PC-9 (cell line): ENCODE measurements at regions of chr10 and their contacts with region 1.

Region 1: DNA sequence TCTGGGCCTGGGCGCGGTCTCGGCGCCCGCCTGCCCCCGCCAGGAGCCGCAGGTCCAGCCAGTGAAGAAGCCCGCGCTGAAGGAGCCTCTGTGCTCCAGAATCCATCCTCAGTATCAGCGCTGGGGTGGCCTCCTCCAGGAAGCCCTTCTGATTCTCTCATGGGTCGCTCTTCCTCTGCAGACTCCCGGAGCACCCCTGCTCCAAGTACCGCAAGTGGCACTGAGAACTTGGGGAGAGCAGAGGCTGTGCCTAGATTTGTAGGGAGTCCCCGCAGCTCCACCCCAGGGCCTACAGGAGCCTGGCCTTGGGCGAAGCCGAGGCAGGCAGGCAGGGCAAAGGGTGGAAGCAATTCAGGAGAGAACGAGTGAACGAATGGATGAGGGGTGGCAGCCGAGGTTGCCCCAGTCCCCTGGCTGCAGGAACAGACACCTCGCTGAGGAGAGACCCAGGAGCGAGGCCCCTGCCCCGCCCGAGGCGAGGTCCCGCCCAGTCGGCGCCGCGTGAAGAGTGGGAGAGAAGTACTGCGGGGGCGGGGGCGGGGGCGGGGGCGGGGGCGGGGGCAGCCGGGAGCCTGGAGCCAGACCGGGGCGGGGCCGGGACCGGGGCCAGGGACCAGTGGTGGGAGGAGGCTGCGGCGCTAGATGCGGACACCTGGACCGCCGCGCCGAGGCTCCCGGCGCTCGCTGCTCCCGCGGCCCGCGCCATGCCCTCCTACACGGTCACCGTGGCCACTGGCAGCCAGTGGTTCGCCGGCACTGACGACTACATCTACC is at the start of gene ALOX5:
- DNase-seq: peak; percentile 52 to 91
- H3K4me3 ChIP-seq: peak within 1 kb of the TSS; percentile 84
- H3K27ac ChIP-seq: peak within 1 kb of the TSS; percentile 99
- H3K4me1 ChIP-seq: peaks cover 37% of the 10 kb centered on the region
- H3K27me3 ChIP-seq: no peaks in the 10 kb centered on the region
- CTCF ChIP-seq: no peak
- total RNA-seq, gene ALOX5: 66.5 and 86.8 TPM in 2 replicates

Region 2: DNA sequence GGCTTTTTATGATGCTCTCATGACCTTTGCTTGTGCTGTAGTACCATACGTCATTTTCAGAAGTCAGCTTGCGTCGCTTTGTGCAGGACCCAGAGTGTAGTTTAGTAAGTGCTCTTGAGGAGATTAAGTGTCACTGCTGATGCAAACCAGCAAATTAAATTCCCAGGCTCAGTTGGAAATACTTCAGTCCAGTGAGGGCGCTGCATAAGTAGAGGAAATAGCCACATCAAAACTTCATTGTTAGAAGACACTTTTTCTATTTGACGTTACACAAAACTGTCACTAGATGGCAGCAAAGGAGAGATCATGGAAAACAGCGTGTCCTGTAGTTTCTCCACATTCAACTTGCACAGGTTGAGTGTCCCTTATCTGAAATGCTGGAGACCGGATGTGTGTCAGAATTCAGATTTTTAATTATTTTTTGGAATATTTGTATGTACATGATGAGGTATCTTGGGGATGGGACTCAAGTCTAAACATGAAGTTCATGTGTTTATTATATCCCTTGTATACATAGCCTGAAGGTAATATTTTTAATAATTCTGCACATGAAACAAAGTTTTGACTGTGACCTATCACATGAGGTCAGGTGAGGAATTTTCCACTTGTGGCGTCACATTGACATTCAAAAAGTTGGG is 365.1 kb before region 1 on chr10:
- CTCF ChIA-PET with region 1: no interaction called
- POLR2A ChIA-PET with region 1: no interaction called
- intact Hi-C with region 1: loop called (anchors 10 kb)
- DNase-seq: peak; percentile 54 to 84
- H3K4me3 ChIP-seq: no peak overlapping the region
- H3K27ac ChIP-seq: no peak overlapping the region
- H3K4me1 ChIP-seq: no peaks in the 10 kb centered on the region
- H3K27me3 ChIP-seq: no peaks in the 10 kb centered on the region
- CTCF ChIP-seq: peak; percentile 92

Region 3: DNA sequence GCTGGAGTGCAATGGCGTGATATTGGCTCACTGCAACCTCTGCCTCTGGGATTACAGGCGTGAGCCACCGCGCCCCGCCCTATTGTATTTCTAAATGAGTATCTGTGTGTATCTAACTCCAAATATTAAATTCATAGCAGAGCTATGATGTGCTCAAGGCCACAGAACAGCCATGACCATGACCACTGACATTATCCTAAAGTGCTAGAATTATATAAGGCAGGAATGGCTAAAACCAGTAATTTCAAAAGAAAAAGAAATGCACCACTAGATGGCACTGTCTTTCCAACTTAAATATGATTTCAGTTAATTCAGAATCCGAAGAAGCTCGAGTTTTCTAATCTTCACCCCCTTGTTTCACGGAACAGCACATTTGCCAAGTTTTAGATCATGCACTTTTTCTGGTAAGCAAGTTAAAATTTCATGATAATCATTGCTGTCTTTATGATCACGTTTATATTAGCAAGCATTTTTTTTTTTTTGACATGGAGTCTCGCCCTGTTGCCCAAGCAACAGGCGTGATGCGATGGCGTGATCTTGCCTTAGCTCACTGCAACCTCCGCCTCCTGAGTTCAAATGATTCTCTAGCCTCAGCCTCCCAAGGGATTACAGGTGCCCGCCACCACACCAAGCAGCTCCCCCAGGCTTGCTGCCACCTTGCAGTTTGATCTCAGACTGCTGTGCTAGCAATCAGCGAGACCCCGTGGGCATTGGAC is 123.6 kb before region 1 on chr10:
- CTCF ChIA-PET with region 1: no interaction called
- POLR2A ChIA-PET with region 1: no interaction called
- intact Hi-C with region 1: loop called (anchors 10 kb)
- DNase-seq: peak; percentile 46 to 77
- H3K4me3 ChIP-seq: peak overlapping the region; percentile 48; the same call in 1 of the 2 replicates
- H3K27ac ChIP-seq: no peak overlapping the region
- H3K4me1 ChIP-seq: no peaks in the 10 kb centered on the region
- H3K27me3 ChIP-seq: no peaks in the 10 kb centered on the region
- CTCF ChIP-seq: peak; percentile 94

Region 4: DNA sequence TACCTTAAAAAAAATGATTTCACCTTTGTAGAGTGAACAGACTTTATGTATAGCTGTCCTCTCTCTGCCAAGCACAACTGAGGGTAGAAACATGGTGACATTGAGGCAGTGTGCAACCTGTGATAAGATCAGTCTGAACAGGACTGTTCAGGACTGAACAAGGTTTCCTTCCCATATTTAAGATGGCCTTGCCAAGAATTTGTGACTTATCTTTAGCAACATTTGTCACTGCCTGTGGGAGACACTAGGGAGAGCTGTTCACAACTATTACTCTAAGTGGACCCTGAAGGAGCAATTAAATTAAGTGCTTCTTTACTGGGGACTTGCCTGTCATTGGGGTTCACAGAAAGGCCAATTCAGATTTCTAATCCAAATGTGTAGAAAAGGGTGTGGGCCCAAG is 65.1 kb before region 1 on chr10:
- CTCF ChIA-PET with region 1: no interaction called
- POLR2A ChIA-PET with region 1: interaction called, 4 read pairs
- intact Hi-C with region 1: loop called (anchors 2 kb)
- DNase-seq: no peak
- H3K4me3 ChIP-seq: no peak overlapping the region
- H3K27ac ChIP-seq: no peak overlapping the region
- H3K4me1 ChIP-seq: no peaks in the 10 kb centered on the region
- H3K27me3 ChIP-seq: 0 out of 2 replicates have a peak, but pooled peaks cover under 1% of the 10 kb centered on the region
- CTCF ChIP-seq: peak; percentile 52

Region 5: GRCh38 chr10:45354261-45354660 is 19.5 kb before region 1 on chr10:
- CTCF ChIA-PET with region 1: interaction called, 3 read pairs
- POLR2A ChIA-PET with region 1: no interaction called
- intact Hi-C with region 1: loop called (anchors 1 kb)
- DNase-seq: peak; percentile 62 to 82
- H3K4me3 ChIP-seq: no peak overlapping the region
- H3K27ac ChIP-seq: no peak overlapping the region
- H3K4me1 ChIP-seq: no peaks in the 10 kb centered on the region; the same call in 1 of the 2 replicates
- H3K27me3 ChIP-seq: no peaks in the 10 kb centered on the region
- CTCF ChIP-seq: no peak

Region 6: GRCh38 chr10:45425621-45426563 is 52.1 kb after region 1 on chr10:
- CTCF ChIA-PET with region 1: no interaction called
- POLR2A ChIA-PET with region 1: no interaction called
- intact Hi-C with region 1: loop called (anchors 2 kb)
- DNase-seq: peak; percentile 75
- H3K4me3 ChIP-seq: no peak overlapping the region
- H3K27ac ChIP-seq: 0 out of 2 replicates have a peak overlapping the region, but pooled peaks have one; percentile 11
- H3K4me1 ChIP-seq: peaks cover 12% of the 10 kb centered on the region
- H3K27me3 ChIP-seq: no peaks in the 10 kb centered on the region
- CTCF ChIP-seq: no peak